Heart right ventricle (tissue), 16 donors: ENCODE measurements at regions of chr17 and their contacts with region 1.

Region 1: DNA sequence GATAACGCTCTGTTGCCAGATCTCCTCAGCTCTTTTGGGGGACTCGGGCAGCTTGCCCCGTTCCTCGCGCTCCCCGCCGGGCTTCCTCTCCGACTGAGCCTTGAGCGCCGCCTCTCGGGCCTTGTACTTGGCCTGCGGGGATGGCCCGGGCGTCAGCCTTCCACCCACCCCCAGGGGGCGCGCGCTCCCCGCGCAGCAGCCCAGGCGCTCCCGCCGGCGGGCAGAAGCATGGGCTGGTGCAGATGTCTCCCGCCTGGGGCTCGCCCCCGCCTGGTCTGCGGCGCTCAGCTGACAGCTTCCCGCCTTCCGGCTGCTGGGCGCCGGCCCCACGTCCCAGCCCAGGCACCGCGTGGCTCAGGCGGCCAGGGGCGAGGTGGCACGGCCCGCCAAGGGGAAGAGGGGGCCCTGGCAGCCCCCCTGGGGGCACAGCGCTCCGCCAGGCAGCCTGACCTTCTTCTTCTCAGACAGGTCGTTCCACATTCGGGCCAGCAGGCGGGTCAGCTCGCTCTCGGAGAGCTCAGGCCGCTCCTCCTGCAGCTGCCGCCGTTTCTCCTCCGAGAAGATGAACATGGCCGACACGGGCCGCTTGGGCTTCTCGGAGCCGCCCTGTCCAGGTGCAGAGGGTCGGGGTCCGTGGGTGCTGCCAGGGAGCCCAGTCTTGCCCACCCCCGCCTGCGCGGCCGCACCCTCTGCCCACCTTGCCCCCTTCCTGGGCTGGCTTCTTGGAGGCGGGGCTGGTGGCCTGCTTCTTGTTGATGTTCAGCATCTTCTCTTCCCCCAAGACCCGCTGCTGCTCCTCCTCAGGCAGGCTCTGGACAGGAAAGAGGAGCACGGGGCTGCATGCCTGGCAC is 8.9 kb downstream of the UBTF start:
- DNase-seq: peak; percentile 86 to 91
- ATAC-seq: peak; percentile 87 to 96 (median 92)
- H3K4me3 ChIP-seq: peak overlapping the region in 2 of 10 donors; percentile 6 to 19
- H3K27ac ChIP-seq: peak overlapping the region in 7 of 10 donors; percentile 11 to 72 (median 48)
- H3K4me1 ChIP-seq: peaks cover 5 to 26% (median 13%) of the 10 kb centered on the region in 9 donors
- H3K27me3 ChIP-seq: no peaks in the 10 kb centered on the region
- CTCF ChIP-seq: peak; percentile 97 to 100 (median 99)

Region 2: GRCh38 chr17:44308320-44308818 is 97.8 kb after region 1 on chr17 and contains the start of gene RUNDC3A:
- intact Hi-C with region 1: no loop called
- DNase-seq: peak; percentile 89
- ATAC-seq: peak; percentile 96 to 99 (median 98)
- H3K4me3 ChIP-seq: peak within 1 kb of the TSS; percentile 7 to 64 (median 52)
- H3K27ac ChIP-seq: peak within 1 kb of the TSS in 3 of 10 donors; percentile 26 to 53 (median 49)
- H3K4me1 ChIP-seq: peaks cover 4 to 24% (median 17%) of the 10 kb centered on the region in 9 donors
- H3K27me3 ChIP-seq: peaks cover 0 to 54% (median 27%) of the 10 kb centered on the region in 7 donors
- CTCF ChIP-seq: no peak
- total RNA-seq, gene RUNDC3A: 0.15 to 1.9 (median 0.69) TPM in 9 of 10 donors, not detected in the other

Region 3: DNA sequence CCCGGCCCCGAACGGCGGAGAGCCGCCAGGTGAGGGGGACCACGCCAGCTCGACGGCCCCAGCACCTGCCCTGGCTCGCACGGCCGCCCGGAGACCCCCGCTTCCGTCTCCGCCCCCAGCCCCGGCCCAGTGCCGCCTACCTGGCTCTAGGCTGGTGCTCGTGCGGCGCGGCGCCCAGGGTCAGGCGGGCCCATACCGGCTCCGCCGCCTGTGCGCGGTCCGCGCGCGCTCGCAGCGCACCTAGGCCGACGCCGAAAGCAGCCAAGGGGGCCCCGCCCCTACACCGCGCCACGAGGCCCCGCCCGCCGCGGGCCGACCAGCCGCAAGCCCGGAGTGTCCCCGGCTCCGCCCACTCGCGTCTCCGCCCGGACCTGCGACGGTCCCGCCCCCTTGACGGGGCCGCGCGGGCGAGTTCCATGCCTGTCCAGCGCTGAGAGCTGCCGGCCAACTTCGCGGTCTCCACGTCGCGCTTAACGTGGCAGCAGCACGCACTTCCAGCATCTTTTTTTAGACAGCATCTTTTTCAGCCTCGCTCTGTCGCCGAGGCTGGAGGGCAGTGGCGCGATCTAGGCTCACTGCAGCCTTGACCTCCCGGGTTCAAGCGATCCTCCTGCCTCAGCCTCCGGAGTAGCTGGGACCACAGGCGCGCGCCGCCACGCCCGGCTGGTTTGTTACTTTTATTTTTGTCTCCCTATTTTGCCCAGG is 114.2 kb after region 1 on chr17 and contains the start of gene SLC25A39:
- intact Hi-C with region 1: loop called in 5 of 10 experiments (anchors 2 to 5 kb)
- DNase-seq: peak; percentile 94 to 97
- ATAC-seq: peak; percentile 88 to 93 (median 92)
- H3K4me3 ChIP-seq: peak within 1 kb of the TSS; percentile 90 to 100 (median 98)
- H3K27ac ChIP-seq: peak within 1 kb of the TSS; percentile 79 to 98 (median 94)
- H3K4me1 ChIP-seq: peaks cover 9 to 41% (median 35%) of the 10 kb centered on the region in 9 donors
- H3K27me3 ChIP-seq: no peaks in the 10 kb centered on the region
- CTCF ChIP-seq: no peak
- total RNA-seq, gene SLC25A39: 36.3 to 54.7 (median 43.1) TPM

Region 4: DNA sequence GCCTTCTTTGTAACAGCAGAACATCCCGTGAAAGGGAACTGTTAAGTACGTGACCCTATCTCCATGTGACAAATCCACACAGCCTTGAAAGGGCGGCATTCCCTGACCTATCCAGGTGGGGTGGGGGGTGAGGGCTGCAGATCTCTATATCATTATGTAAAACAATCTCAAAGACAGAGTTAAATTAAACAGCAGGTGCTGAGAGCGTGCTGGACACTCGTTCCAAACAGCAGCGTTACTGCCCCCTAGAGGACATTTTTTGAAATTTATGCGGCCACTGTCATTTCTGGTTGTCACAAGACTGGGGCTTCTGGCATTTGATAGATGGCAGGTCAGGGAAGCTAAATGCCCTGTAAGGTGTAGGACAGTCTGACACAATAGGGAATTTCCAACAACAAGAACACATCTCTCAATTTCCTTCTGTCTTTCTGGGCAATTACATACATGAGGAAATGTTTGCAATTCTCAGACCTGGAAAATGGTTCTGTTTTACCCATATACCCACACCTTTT is 120.7 kb after region 1 on chr17:
- intact Hi-C with region 1: loop called in 8 of 10 experiments (anchors 1 to 5 kb)
- DNase-seq: peak in 1 of 2 donors; percentile 85
- ATAC-seq: peak in 7 of 8 donors; percentile 8 to 45 (median 40)
- H3K4me3 ChIP-seq: no peak overlapping the region
- H3K27ac ChIP-seq: peak overlapping the region in 1 of 10 donors; percentile 30
- H3K4me1 ChIP-seq: peaks cover under 1 to 58% (median 9%) of the 10 kb centered on the region in 9 donors
- H3K27me3 ChIP-seq: no peaks in the 10 kb centered on the region
- CTCF ChIP-seq: peak; percentile 73 to 90 (median 85)

Region 5: DNA sequence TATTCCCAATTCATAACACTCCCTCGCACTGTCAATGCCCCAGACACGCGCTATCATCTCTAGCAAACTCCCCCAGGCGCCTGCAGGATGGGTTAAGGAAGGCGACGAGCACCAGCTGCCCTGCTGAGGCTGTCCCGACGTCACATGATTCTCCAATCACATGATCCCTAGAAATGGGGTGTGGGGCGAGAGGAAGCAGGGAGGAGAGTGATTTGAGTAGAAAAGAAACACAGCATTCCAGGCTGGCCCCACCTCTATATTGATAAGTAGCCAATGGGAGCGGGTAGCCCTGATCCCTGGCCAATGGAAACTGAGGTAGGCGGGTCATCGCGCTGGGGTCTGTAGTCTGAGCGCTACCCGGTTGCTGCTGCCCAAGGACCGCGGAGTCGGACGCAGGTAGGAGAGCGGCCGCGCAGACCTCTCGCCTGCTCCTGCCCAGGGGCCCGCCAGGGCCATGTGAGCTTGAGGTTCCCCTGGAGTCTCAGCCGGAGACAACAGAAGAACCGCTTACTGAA is 134.4 kb after region 1 on chr17 and contains the start of gene GRN:
- intact Hi-C with region 1: loop called in 3 of 10 experiments (anchors 5 kb)
- DNase-seq: peak; percentile 86 to 96
- ATAC-seq: peak; percentile 97 to 99 (median 98)
- H3K4me3 ChIP-seq: peak within 1 kb of the TSS; percentile 50 to 90 (median 82)
- H3K27ac ChIP-seq: peak within 1 kb of the TSS; percentile 66 to 94 (median 90)
- H3K4me1 ChIP-seq: peaks cover 0 to 57% (median 16%) of the 10 kb centered on the region in 9 donors
- H3K27me3 ChIP-seq: no peaks in the 10 kb centered on the region
- CTCF ChIP-seq: no peak
- total RNA-seq, gene GRN: 113 to 303 (median 154) TPM